Activated CD4-positive, alpha-beta T cell treated with anti-CD3 and anti-CD28 coated beads for 36 hours (primary cell): ENCODE measurements at regions of chr15 and their contacts with region 1.

Region 1: DNA sequence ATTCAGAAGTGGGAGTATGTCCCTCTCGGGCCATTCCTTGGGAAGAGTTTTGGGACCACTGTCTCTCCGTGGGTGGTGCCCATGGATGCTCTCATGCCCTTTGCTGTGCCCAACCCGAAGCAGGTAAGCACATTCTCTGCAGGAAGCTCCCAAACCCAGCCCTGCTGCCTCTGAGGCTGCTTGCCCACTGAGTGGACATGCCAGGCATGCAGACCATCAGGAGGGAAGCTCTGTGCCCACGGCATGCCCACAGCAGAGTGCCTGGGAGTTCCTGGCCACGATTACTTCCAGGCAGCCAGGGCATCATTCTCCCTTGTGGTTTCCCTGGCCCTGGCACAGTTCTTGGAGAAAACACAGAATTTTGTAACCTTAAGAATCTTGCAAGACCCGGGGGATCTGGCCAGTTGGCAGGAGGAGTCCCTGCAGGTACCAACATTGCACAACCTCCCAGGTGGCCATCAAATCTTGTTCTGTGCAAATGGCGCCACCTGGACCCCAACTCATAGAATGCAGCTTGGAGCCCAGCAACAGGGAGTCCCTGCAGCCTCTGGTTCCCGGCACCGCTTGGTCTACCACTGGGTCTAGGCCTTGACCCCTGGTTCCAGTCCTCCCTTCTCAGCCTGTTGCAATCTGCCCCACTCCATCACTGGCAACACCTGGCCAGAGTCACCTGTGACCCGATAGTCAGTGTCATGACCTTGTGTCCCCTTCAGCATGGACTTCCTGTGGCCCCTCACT is 20.4 kb downstream of the FAH start:
- DNase-seq: peak; percentile 85
- ATAC-seq: peak; percentile 88
- H3K4me3 Mint-ChIP-seq: no peak overlapping the region
- H3K27ac Mint-ChIP-seq: no peak overlapping the region
- H3K4me1 Mint-ChIP-seq: no peaks in the 10 kb centered on the region
- H3K27me3 Mint-ChIP-seq: no peaks in the 10 kb centered on the region

Region 2: GRCh38 chr15:79769069-79769481 is 404.1 kb before region 1 on chr15:
- CTCF ChIA-PET with region 1: no interaction called
- POLR2A ChIA-PET with region 1: no interaction called
- intact Hi-C with region 1: loop called (anchors 5 to 10 kb)
- DNase-seq: peak; percentile 25
- ATAC-seq: no peak
- H3K4me3 Mint-ChIP-seq: no peak overlapping the region
- H3K27ac Mint-ChIP-seq: no peak overlapping the region
- H3K4me1 Mint-ChIP-seq: no peaks in the 10 kb centered on the region
- H3K27me3 Mint-ChIP-seq: no peaks in the 10 kb centered on the region

Region 3: GRCh38 chr15:80010131-80010673 is 163.0 kb before region 1 on chr15:
- CTCF ChIA-PET with region 1: no interaction called
- POLR2A ChIA-PET with region 1: no interaction called
- intact Hi-C with region 1: loop called in 1 of 2 experiments (anchors 5 kb)
- DNase-seq: no peak
- ATAC-seq: no peak
- H3K4me3 Mint-ChIP-seq: no peak overlapping the region
- H3K27ac Mint-ChIP-seq: no peak overlapping the region
- H3K4me1 Mint-ChIP-seq: peaks cover 13% of the 10 kb centered on the region
- H3K27me3 Mint-ChIP-seq: no peaks in the 10 kb centered on the region